ENCODE measurements at regions of chr2 and their contacts with region 1.

Region 1: DNA sequence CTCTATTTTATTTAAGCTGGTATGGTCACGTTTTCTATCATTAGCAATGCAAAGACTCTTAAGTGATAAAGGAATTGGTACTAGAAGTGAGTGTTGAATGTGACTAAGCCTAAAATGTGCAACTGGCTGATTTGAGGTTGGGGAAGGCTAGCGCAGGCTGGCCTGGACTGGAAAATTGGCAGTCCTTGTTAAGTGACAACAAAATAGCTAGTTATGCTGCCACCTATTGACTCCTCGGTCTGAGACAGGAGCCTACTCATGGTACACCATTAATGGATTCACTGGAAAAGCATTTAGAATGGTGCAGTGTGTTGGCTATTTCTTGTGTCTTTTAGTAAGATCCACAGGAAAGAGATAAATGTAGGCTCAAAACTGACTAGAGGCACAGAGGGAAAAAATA is 5.7 kb upstream of the WIPF1 start:
- DNase-seq: peak in 4 of 5 donors; percentile 45 to 68 (median 62)
- ATAC-seq: peak; percentile 80 to 94 (median 93)
- H3K4me3 ChIP-seq: no peak overlapping the region
- H3K27ac ChIP-seq: peak overlapping the region in 1 of 12 donors; percentile 54
- H3K4me1 ChIP-seq: peaks cover 0 to 75% (median 3%) of the 10 kb centered on the region in 12 donors
- H3K27me3 ChIP-seq: no peaks in the 10 kb centered on the region
- CTCF ChIP-seq: peak; percentile 43 to 77 (median 60)
- POLR2A ChIP-seq: no peak

Region 2: GRCh38 chr2:174487108-174487819 is 116.0 kb before region 1 on chr2:
- intact Hi-C with region 1: loop called in 2 of 10 experiments (anchors 5 kb)
- DNase-seq: peak; percentile 100
- ATAC-seq: peak; percentile 99 to 100 (median 99)
- H3K4me3 ChIP-seq: peak overlapping the region; percentile 72 to 96 (median 92)
- H3K27ac ChIP-seq: peak overlapping the region; percentile 83 to 96 (median 91)
- H3K4me1 ChIP-seq: peaks cover 0 to 29% (median 3%) of the 10 kb centered on the region in 12 donors
- H3K27me3 ChIP-seq: no peaks in the 10 kb centered on the region
- CTCF ChIP-seq: no peak
- POLR2A ChIP-seq: no peak

Region 3: GRCh38 chr2:174522553-174522952 is 80.7 kb before region 1 on chr2:
- intact Hi-C with region 1: loop called in 1 of 10 experiments (anchors 1 kb)
- DNase-seq: no peak
- ATAC-seq: peak in 3 of 4 donors; percentile 18 to 42 (median 37)
- H3K4me3 ChIP-seq: no peak overlapping the region
- H3K27ac ChIP-seq: peak overlapping the region in 1 of 12 donors; percentile 85
- H3K4me1 ChIP-seq: peaks cover 0 to 23% (median 0%) of the 10 kb centered on the region in 12 donors
- H3K27me3 ChIP-seq: no peaks in the 10 kb centered on the region
- CTCF ChIP-seq: peak in 11 of 12 donors; percentile 10 to 52 (median 34)
- POLR2A ChIP-seq: no peak

Measured in heart left ventricle (tissue), 16 donors.